Activated CD8-positive, alpha-beta T cell treated with anti-CD3 and anti-CD28 coated beads, Interleukin-2, amount 10 ng/mL, durations not matched to agents 7 days and 5 days (primary cell): ENCODE measurements at regions of chr2 and their contacts with region 1.

Region 1: DNA sequence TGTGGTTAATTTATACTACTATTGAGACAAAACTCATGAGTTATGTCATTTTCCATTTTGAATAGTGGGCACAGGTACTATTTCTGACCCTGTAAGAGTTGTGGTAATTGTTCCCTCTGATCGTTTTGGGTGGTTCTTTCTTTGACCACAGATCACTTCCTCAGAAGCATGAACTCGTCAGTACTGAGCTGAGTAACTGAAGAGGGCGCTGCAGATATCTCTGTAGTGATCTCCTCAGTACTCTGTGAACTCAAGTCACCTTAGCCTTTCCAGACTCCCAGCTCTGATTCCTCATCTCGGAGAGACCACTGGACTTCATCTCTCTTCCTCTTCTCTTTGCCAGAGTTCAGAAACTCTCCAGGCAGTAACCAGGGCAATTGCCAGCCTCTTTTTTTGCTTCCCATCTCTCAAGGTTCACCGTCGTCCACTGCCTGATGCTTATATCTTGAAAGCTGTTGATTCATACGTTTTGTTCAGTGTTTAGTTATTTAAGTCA is 9.4 kb upstream of the IL1RL1 start:
- DNase-seq: peak; percentile 82
- ATAC-seq: peak; percentile 98
- H3K4me3 Mint-ChIP-seq: peak overlapping the region; percentile 32
- H3K27ac Mint-ChIP-seq: peak overlapping the region; percentile 65
- H3K4me1 Mint-ChIP-seq: peaks cover 36% of the 10 kb centered on the region
- H3K27me3 Mint-ChIP-seq: no peaks in the 10 kb centered on the region

Region 2: GRCh38 chr2:102278720-102279390 is 23.1 kb before region 1 on chr2:
- CTCF ChIA-PET with region 1: interaction called, 38 read pairs
- POLR2A ChIA-PET with region 1: interaction called, 5 read pairs
- DNase-seq: no peak
- ATAC-seq: no peak
- H3K4me3 Mint-ChIP-seq: no peak overlapping the region
- H3K27ac Mint-ChIP-seq: peak overlapping the region; percentile 80
- H3K4me1 Mint-ChIP-seq: peaks cover 72% of the 10 kb centered on the region
- H3K27me3 Mint-ChIP-seq: no peaks in the 10 kb centered on the region

Region 3: GRCh38 chr2:102291318-102292251 is 10.3 kb before region 1 on chr2:
- CTCF ChIA-PET with region 1: interaction called, 35 read pairs
- POLR2A ChIA-PET with region 1: no interaction called
- DNase-seq: no peak
- ATAC-seq: peak; percentile 61
- H3K4me3 Mint-ChIP-seq: no peak overlapping the region
- H3K27ac Mint-ChIP-seq: peak overlapping the region; percentile 75
- H3K4me1 Mint-ChIP-seq: peaks cover 49% of the 10 kb centered on the region
- H3K27me3 Mint-ChIP-seq: no peaks in the 10 kb centered on the region

Region 4: DNA sequence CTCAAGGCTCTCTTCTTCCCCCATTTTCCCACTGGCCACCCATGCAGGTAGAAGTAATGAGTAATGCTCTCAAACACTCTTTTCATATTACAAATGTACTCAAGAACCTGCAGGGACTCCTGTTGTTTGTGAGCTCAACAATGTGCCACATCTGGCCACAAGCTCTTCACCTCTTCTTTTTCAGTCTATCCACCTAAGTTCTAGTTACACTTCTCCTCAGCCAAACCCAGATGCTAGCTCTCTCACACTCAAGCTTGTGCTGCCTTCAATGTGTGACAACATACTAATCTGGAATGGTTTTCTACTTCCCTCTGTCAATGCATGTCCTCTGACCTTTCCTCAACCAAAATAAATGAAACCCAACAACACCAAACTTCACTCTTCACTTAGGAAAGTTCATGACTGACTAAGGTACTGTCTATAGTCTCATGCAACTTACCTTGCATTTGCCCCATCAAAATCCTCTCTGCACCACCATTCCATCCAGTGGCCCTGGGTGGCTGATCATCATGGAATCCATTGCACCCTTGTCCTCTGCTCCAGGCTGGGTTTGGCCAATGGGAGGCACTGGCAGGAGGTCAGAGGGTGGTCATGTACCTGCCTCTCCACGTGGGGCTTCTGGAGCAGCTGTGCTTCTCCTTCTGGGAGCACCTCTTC is 48.4 kb after region 1 on chr2:
- CTCF ChIA-PET with region 1: interaction called, 24 read pairs
- POLR2A ChIA-PET with region 1: no interaction called
- DNase-seq: no peak
- ATAC-seq: no peak
- H3K4me3 Mint-ChIP-seq: no peak overlapping the region
- H3K27ac Mint-ChIP-seq: no peak overlapping the region
- H3K4me1 Mint-ChIP-seq: peaks cover 20% of the 10 kb centered on the region
- H3K27me3 Mint-ChIP-seq: peaks cover 7% of the 10 kb centered on the region